ENCODE measurements at regions of chr9 and their contacts with region 1.

Region 1: DNA sequence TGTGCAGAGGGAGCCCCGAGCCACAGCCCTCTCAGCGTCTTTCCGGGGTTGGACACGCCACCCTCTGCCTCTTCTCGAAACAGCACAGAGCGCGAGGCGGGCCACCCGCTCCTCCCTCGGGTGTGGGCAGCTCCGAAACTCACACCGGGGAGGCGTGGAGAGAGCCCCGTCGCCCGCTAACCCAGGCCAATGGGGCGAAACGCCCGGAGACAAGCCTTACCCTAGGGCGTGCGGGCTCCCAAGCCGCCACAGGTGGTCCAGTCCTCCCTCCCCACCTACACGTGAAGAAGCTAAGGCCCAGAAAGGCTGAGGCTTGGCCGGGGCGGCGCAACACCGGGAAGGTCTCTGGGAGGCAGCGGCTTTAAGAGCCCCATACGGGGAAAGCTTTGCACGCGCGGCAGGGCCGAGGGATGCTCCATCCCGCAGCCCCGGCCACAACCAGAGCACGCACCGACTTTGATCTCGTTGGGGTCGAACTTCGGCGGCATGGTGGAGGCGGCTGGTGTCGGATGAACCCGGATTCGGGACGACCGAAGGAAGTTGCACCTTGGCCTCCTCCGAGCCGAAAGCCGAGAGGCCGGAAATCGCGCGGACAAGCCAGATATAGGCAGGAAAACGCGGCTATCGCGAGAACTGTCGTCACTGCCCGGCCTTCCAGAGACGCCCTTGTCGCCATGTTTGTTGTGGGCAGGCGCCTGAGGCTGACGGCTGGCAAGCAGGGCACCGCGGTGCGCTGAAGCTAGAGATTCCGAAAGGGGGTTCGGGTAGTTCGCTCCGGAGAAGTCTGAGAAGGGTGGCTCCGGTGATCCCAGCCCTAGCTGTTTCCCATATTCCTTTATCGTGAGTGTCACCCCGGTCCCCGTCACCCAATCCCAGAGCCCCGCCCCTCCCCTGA is at the starts of genes LRSAM1 and RPL12:
- DNase-seq: peak; percentile 99
- ATAC-seq: peak; percentile 65
- H3K4me3 Mint-ChIP-seq: peak within 1 kb of the TSS; percentile 98
- H3K27ac Mint-ChIP-seq: peak within 1 kb of the TSS; percentile 98
- H3K4me1 Mint-ChIP-seq: peaks cover 36% of the 10 kb centered on the region
- H3K27me3 Mint-ChIP-seq: no peaks in the 10 kb centered on the region
- total RNA-seq, gene LRSAM1: 20.0 to 20.4 TPM
- total RNA-seq, gene RPL12: 2,222 to 2,735 TPM

Region 2: DNA sequence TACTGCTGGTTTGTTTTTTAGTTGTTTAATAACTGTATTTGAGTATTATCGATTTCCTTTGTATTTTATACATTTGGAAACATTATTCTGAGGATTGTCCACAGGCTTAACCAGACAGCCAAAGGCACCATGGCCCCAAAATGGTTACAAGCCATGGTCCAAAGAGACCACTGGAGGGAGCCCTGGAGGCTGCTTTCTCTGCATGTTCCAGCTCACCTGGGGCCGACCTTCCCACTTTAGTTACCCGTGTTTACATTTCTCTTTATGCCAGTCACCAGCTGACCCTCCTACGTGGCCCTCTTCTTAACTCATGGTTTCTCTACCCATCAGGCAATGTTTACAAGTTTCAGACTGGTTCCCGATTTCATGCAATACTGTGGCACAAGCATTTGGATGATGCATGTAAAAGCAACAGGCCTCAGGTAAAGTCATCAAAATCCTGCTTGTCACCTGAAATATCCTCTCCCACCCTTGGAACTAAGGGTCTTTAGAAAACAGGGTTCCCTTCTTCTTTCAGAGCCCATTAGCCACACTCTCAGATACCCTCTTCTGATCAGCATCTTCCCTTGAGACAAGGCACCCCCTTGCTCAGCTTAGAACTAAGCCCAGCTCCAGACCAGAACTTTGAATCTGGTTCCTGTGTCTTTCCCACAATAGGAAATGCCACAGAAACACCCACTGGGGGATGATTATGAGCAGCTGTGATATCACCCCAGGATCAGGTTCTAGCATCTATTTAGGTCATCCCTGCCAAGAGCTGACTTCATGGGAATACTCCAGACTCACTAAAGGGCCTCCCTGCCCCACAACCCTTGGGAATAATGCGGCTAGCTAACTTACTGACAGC is 236.4 kb before region 1 on chr9:
- CTCF ChIA-PET with region 1: interaction called, 3 read pairs
- POLR2A ChIA-PET with region 1: no interaction called
- intact Hi-C with region 1: loop called in 1 of 2 experiments (anchors 2 kb)
- DNase-seq: peak; percentile 80
- ATAC-seq: peak; percentile 83
- H3K4me3 Mint-ChIP-seq: no peak overlapping the region
- H3K27ac Mint-ChIP-seq: no peak overlapping the region
- H3K4me1 Mint-ChIP-seq: peaks cover 4% of the 10 kb centered on the region
- H3K27me3 Mint-ChIP-seq: no peaks in the 10 kb centered on the region

Region 3: GRCh38 chr9:127244609-127245601 is 206.2 kb before region 1 on chr9:
- CTCF ChIA-PET with region 1: interaction called, 3 read pairs
- POLR2A ChIA-PET with region 1: no interaction called
- intact Hi-C with region 1: loop called in 1 of 2 experiments (anchors 1 kb)
- DNase-seq: peak; percentile 98
- ATAC-seq: peak; percentile 100
- H3K4me3 Mint-ChIP-seq: peak overlapping the region; percentile 78
- H3K27ac Mint-ChIP-seq: peak overlapping the region; percentile 59
- H3K4me1 Mint-ChIP-seq: peaks cover 6% of the 10 kb centered on the region
- H3K27me3 Mint-ChIP-seq: peaks cover 5% of the 10 kb centered on the region

Region 4: DNA sequence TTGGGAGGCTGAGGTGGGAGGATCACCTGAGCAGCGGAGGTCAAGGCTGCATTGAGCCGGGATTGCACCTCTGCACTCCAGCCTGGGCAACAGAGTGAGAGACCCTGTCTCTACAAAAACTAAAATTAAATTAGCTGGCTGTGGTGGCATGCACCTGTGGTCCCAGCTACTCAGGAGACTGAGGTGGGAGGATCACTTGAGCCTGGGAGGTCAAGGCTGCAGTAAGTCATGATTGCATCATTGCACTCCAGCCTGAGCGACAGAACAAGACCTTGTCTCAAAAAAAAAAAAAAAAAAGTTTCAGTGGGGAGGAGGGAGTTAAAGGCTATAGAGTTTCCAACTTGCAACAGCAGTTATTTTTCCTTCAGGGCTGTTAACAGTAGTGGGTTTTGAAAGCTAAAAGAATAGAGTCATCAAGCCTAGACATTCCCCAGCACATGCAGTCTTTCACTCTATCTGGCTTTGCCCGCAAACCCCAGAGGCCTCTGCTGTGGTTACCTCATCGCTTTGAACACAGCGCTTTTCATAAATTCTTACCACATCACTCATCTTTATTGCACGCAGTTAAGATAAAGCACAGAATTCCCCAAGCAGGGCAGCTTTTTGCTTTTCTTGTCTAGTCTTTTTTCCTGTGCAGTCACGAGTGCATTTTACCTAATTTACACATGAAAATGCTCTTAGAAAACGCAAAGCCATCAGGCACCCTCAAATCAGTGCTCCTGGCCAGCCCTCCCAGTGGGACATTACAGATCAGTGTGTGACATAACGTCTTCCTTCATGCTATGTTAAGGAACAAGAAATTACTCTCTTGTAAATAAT is 62.8 kb before region 1 on chr9:
- CTCF ChIA-PET with region 1: no interaction called
- POLR2A ChIA-PET with region 1: interaction called, 4 read pairs
- intact Hi-C with region 1: loop called in 1 of 2 experiments (anchors 2 kb)
- DNase-seq: peak; percentile 94
- ATAC-seq: peak; percentile 97
- H3K4me3 Mint-ChIP-seq: peak overlapping the region; percentile 3
- H3K27ac Mint-ChIP-seq: peak overlapping the region; percentile 81
- H3K4me1 Mint-ChIP-seq: peaks cover 20% of the 10 kb centered on the region
- H3K27me3 Mint-ChIP-seq: peaks cover 68% of the 10 kb centered on the region

Region 5: DNA sequence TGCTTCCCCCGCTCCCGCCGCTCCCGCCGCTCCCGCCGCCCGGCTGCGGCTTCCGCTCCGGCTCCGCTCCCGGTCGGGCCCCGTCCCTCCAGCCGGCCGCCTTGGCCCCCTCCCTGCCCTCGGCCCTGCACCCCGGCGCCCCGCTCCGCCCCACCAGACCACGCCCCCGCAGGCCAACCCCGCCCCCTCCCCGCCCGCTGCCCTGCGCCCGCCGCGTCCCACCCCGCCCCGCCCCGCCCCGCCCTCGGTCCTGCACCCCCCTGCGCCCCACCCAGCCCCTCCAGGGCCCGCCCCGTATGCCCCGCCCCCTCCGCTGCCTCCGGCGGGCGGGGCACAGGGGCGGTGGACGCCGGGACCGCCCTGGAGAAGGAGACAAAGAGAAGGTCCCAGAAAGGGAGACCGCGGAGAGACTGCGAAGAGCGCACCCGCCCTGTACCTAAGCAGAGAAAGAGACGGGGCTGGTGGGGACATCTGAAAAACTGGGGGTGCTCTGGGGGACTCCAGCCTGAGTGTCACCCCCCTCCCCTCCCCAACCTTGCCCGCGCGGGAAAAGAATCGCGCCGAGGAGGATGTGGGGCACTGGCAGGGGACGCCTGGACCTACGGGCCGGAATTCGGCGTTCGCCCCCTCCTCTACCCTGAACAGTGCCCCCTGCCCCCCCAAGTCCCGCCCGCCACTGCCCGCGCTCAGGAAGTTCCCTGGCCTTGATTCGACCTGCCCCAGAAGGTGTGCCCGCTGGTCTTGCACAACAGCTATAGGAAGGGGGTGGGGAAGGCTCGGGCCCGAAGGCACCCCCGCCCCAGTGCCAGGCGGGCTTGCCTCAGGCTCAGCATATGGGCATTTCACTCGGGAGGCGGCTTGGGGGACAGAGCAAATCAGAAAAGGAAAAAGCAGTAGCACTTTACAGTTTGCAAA is 118.2 kb after region 1 on chr9:
- CTCF ChIA-PET with region 1: no interaction called
- POLR2A ChIA-PET with region 1: no interaction called
- intact Hi-C with region 1: loop called in 1 of 2 experiments (anchors 2 kb)
- DNase-seq: peak; percentile 88
- ATAC-seq: peak; percentile 85
- H3K4me3 Mint-ChIP-seq: peak overlapping the region; percentile 71
- H3K27ac Mint-ChIP-seq: peak overlapping the region; percentile 38
- H3K4me1 Mint-ChIP-seq: peaks cover 26% of the 10 kb centered on the region
- H3K27me3 Mint-ChIP-seq: no peaks in the 10 kb centered on the region

Region 6: DNA sequence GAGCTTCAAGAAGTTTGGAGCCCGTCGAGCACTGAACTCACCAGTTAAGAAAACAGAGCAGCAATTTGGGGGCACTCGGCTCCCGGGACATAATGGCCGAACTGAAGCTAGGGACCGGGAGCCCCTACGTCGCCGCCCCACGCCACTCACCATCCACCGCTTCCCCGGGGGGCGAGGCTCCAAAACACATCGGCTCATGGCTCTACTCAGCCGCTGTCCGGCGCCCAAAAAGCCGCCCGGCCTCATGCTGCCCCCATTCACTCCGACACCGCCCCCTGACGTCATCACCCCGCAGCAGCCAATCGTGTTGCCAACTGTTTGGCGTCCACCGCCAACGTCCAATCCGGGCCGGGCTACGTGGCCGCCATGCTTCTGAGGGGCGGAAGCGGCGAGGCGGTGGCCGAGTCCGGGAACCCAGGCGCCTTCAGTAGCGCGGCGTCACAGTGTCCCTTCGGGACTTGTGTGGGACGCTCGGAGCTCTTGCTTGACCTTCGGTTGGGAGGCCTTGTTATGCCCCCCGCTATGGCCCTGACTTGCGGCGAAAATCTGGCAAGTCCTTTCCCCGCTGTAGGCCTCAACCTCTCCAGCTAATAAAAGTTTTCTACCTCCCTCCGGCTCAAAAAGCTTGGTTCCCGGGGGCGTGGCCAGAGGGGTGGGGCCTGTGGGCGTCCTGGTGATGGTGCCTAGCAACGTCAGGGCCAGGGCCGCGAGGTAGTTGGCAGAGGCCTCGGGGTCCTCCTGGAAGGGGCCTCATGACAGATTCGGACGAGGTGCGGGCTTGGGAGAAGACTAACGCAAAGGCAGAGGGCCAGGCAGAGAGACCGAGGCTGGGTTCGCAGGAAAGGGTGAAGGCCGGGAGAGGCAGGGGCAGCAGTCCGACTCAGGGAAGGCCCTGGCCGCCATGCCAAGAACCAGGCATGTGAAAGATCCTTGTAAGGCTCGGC is 264.6 kb after region 1 on chr9 and contains the starts of genes PTRH1 and TTC16:
- CTCF ChIA-PET with region 1: no interaction called
- POLR2A ChIA-PET with region 1: interaction called, 3 read pairs
- intact Hi-C with region 1: loop called in 1 of 2 experiments (anchors 1 kb)
- DNase-seq: peak; percentile 99
- ATAC-seq: peak; percentile 97
- H3K4me3 Mint-ChIP-seq: peak within 1 kb of the TSS; percentile 92
- H3K27ac Mint-ChIP-seq: peak within 1 kb of the TSS; percentile 97
- H3K4me1 Mint-ChIP-seq: peaks cover 25% of the 10 kb centered on the region
- H3K27me3 Mint-ChIP-seq: no peaks in the 10 kb centered on the region
- total RNA-seq, gene PTRH1: 12.9 to 15.1 TPM
- total RNA-seq, gene TTC16: 0.16 to 0.30 TPM

Region 7: DNA sequence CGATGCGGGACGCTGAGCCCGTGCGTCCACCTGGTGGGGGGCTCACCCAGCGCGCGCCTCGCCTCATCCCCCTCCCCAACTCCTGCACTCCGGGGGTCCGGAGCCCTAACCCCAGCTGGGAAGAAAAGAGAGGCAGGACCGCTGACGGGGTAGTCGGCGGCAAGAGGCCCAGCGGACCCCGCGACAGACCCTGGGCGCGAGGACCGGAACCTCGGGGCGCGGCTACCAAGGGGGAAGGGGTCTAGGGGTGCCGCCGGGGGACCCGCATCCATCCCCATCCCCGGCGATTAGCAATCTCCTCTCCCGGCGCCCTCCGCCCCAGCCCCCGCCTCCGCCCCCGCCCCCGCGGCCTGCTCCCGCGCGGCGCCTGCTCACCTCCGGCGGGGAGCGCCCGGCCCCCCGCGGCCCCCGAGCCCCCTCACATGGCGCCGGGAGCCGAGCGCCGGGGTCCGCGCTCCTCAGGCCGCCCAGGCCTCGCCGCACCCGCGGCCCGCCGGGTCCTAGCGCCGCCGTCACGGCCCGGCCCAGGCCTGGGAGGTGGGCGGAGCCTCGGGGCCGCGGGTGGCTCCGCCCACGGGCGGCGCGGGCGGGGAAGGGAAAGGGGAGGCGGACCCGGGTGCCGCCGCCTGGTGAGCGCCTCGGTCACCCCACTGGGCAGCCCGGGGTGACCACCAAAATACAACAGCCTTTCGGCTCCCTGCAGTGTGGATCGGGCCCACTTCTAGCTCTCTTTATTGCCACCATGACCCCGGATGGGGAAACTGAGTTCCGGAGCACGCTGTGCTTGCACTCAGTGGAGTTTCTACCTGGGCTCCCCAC is 448.3 kb after region 1 on chr9 and contains the start of gene ST6GALNAC6:
- CTCF ChIA-PET with region 1: no interaction called
- POLR2A ChIA-PET with region 1: no interaction called
- intact Hi-C with region 1: loop called in 1 of 2 experiments (anchors 2 kb)
- DNase-seq: peak; percentile 85
- ATAC-seq: peak; percentile 69
- H3K4me3 Mint-ChIP-seq: peak within 1 kb of the TSS; percentile 82
- H3K27ac Mint-ChIP-seq: peak within 1 kb of the TSS; percentile 87
- H3K4me1 Mint-ChIP-seq: peaks cover 35% of the 10 kb centered on the region
- H3K27me3 Mint-ChIP-seq: no peaks in the 10 kb centered on the region
- total RNA-seq, gene ST6GALNAC6: 46.3 to 63.3 TPM

Measured in activated CD4-positive, alpha-beta T cell treated with anti-CD3 and anti-CD28 coated beads for 36 hours (primary cell).